Activated CD8-positive, alpha-beta memory T cell treated with anti-CD3 and anti-CD28 coated beads, Interleukin-2, amount 10 ng/mL, durations not matched to agents 7 days and 5 days (primary cell): ENCODE measurements at regions of chr13 and their contacts with region 1.

Region 1: GRCh38 chr13:98842864-98843481 is 90.5 kb upstream of the SLC15A1 start:
- DNase-seq: peak; percentile 78
- ATAC-seq: peak; percentile 75
- H3K4me3 Mint-ChIP-seq: no peak overlapping the region
- H3K27ac Mint-ChIP-seq: peak overlapping the region; percentile 29
- H3K4me1 Mint-ChIP-seq: peaks cover 6% of the 10 kb centered on the region
- H3K27me3 Mint-ChIP-seq: no peaks in the 10 kb centered on the region

Region 2: GRCh38 chr13:98821372-98822224 is 21.4 kb before region 1 on chr13:
- CTCF ChIA-PET with region 1: interaction called, 10 read pairs
- DNase-seq: no peak
- ATAC-seq: no peak
- H3K4me3 Mint-ChIP-seq: no peak overlapping the region
- H3K27ac Mint-ChIP-seq: no peak overlapping the region
- H3K4me1 Mint-ChIP-seq: peaks cover 10% of the 10 kb centered on the region
- H3K27me3 Mint-ChIP-seq: no peaks in the 10 kb centered on the region

Region 3: GRCh38 chr13:98831236-98831635 is 11.7 kb before region 1 on chr13:
- CTCF ChIA-PET with region 1: interaction called, 15 read pairs
- DNase-seq: no peak
- ATAC-seq: no peak
- H3K4me3 Mint-ChIP-seq: no peak overlapping the region
- H3K27ac Mint-ChIP-seq: no peak overlapping the region
- H3K4me1 Mint-ChIP-seq: peaks cover 5% of the 10 kb centered on the region
- H3K27me3 Mint-ChIP-seq: no peaks in the 10 kb centered on the region

Region 4: GRCh38 chr13:99663185-99663825 is 820.3 kb after region 1 on chr13:
- CTCF ChIA-PET with region 1: no interaction called
- DNase-seq: no peak
- ATAC-seq: no peak
- H3K4me3 Mint-ChIP-seq: no peak overlapping the region
- H3K27ac Mint-ChIP-seq: no peak overlapping the region
- H3K4me1 Mint-ChIP-seq: peaks cover 16% of the 10 kb centered on the region
- H3K27me3 Mint-ChIP-seq: peaks cover 22% of the 10 kb centered on the region